GM12878 (cell line): ENCODE measurements at regions of chr20 and their contacts with region 1.

Region 1: GRCh38 chr20:52191132-52191915 is at the start of gene ZFP64:
- DNase-seq: no peak
- ATAC-seq: peak; percentile 85
- H3K4me3 ChIP-seq: peak within 1 kb of the TSS; percentile 91
- H3K27ac ChIP-seq: peak within 1 kb of the TSS; percentile 93
- H3K4me1 ChIP-seq: peaks cover 3% of the 10 kb centered on the region; the same call in 1 of the 2 replicates
- H3K27me3 ChIP-seq: no peaks in the 10 kb centered on the region
- CTCF ChIP-seq: peak; percentile 64 to 77 (median 71); a peak in 5 of 6 replicates
- EP300 ChIP-seq: 0 out of 4 replicates have a peak, but pooled peaks of 1 of the 2 experiments have one; percentile 30
- POLR2A ChIP-seq: peak; percentile 80
- RAD21 ChIP-seq: peak; percentile 31; the same call in 1 of the 2 replicates
- polyA plus RNA-seq, gene ZFP64: 2.3 to 3.3 TPM

Region 2: GRCh38 chr20:52096117-52096516 is 95.2 kb before region 1 on chr20:
- CTCF ChIA-PET with region 1: no interaction called
- POLR2A ChIA-PET with region 1: no interaction called
- RAD21 ChIA-PET with region 1: no interaction called
- SMC1A ChIA-PET with region 1: no interaction called
- in situ Hi-C with region 1: no loop called
- intact Hi-C with region 1: no loop called
- DNase-seq: no peak
- ATAC-seq: no peak
- H3K4me3 ChIP-seq: no peak overlapping the region
- H3K27ac ChIP-seq: no peak overlapping the region
- H3K4me1 ChIP-seq: no peaks in the 10 kb centered on the region
- H3K27me3 ChIP-seq: no peaks in the 10 kb centered on the region
- CTCF ChIP-seq: no peak
- EP300 ChIP-seq: no peak
- POLR2A ChIP-seq: no peak
- RAD21 ChIP-seq: no peak

Region 3: DNA sequence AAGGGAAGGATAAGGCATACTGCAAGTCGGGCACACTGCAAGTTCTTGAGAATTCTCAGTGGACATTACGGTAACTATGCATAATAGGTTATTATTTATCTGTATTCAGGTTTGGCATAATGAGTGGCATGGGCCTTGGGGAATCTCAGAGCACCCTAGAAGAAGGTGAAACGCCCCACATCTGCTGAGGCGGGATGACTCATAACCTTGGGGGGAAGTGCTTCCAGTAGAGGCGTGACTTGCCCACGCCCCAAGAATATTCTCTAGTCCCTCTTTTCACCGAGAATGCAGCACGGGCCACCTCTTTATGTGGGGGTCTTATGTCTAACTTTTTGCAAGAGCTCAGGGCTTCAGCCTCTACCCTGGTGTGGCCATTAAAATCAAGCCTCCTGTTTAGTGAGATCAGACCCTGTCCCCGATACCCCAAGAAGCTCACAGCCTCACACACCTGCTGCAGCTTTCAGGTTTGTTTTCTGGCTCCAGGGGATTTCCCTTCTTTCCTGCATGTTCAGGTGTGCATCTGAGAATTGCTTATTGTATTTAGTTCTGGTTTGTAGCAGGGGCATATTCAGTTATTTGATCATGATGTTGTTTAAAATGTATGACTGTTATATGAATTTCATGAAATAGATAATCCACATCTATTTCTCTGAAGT is 18.8 kb before region 1 on chr20:
- CTCF ChIA-PET with region 1: interaction called, 7 read pairs
- POLR2A ChIA-PET with region 1: interaction called, 11 read pairs
- RAD21 ChIA-PET with region 1: interaction called, 10 read pairs
- SMC1A ChIA-PET with region 1: interaction called, 14 read pairs
- in situ Hi-C with region 1: no loop called
- intact Hi-C with region 1: no loop called
- DNase-seq: no peak
- ATAC-seq: peak; percentile 92
- H3K4me3 ChIP-seq: peak overlapping the region; percentile 54
- H3K27ac ChIP-seq: peak overlapping the region; percentile 76
- H3K4me1 ChIP-seq: peaks cover 28% of the 10 kb centered on the region
- H3K27me3 ChIP-seq: no peaks in the 10 kb centered on the region
- CTCF ChIP-seq: no peak
- EP300 ChIP-seq: no peak
- POLR2A ChIP-seq: no peak
- RAD21 ChIP-seq: no peak

Region 4: DNA sequence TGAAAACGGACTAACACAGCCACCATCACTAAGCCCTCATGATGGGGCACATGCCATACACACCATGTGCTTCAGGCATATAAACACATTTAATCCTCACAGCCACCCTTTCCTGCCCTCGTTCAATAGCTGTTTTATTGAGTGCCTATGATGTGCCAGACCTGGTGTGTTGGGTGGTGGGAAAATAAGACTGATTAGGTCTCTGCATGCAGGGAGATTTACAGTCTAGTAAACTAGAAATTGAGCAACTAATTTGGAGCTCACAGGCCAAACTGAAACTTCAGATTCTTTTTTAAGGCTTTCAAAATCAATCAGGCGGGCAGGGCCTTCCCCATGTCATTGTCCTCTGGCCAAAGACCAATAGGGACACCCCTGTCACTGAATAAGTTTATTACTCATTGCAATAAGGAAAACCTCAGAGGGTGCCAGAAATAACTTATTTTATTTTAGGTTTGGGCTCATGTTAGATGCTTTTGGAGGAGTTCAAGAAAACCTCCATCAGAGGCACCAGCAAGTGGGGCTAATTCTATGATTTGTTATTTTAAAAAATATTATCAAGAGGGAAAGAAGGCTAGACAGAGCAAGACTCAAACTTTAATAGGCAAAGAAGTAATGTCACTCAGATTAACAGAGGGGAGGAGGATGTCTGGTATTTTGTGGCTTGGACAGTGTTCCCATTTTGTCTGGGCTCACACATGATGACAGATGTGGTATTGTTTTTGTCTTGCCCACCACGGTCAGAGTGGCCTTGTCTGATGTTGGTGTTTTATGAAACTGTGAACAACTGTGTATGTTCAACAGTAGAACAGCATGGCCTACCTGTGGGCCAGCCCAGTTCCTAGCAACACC is 11.8 kb before region 1 on chr20:
- CTCF ChIA-PET with region 1: interaction called, 18 read pairs
- POLR2A ChIA-PET with region 1: interaction called, 40 read pairs
- RAD21 ChIA-PET with region 1: interaction called, 42 read pairs
- SMC1A ChIA-PET with region 1: interaction called, 24 read pairs
- in situ Hi-C with region 1: no loop called
- intact Hi-C with region 1: no loop called
- DNase-seq: peak; percentile 94
- ATAC-seq: peak; percentile 93
- H3K4me3 ChIP-seq: peak overlapping the region; percentile 1; the same call in 1 of the 2 replicates
- H3K27ac ChIP-seq: peak overlapping the region; percentile 93
- H3K4me1 ChIP-seq: peaks cover 40% of the 10 kb centered on the region
- H3K27me3 ChIP-seq: no peaks in the 10 kb centered on the region
- CTCF ChIP-seq: no peak
- EP300 ChIP-seq: peak in 1 of 2 experiments; percentile 79; a peak in 3 of 4 replicates
- POLR2A ChIP-seq: peak; percentile 65
- RAD21 ChIP-seq: no peak